Endothelial cell of umbilical vein (primary cell): ENCODE measurements at regions of chr6 and their contacts with region 1.

Region 1: DNA sequence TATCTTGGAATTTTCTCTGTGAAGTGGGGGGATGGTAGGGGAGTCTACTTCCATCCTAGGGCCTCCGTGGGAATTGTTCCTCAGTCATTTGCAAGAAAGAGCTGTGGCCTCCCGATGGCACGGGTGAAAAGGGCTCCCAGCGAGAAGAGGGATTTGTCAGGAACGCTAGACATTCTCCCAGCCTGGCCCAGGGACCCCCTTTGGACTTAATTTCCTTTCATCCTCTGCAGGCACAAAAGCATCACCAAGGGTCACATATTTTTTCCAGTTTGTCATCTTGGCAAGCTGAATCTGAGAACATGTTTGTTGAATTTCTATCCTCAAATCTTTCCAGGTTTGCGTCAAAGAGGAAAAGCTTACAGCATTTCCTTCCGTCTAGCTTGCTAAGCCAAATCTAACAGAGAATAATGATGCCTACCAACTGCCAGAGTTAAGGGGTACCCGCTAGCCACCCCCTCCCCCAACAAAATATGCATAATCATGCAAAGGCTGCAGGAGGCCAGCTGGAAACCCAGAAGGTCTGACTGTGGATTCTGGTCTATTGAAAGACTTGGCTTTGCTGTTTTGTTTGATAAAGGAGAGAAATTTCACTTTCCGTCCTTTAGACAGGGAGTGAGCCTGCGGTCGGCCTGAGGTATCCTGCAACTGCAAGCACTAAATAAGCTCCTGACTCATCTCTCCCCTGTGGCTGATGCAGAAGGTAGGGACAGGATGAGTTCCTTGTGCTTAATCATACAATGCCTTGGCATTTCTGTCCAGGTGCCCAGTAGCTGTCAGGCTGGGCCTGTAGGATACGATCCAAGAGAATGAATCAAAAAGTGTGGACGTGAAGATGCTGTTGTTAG is 23.1 kb downstream of the PSMG4 start:
- DNase-seq: peak; percentile 94
- H3K4me3 ChIP-seq: no peak overlapping the region
- H3K27ac ChIP-seq: peak overlapping the region; percentile 97
- H3K4me1 ChIP-seq: peaks cover 27% of the 10 kb centered on the region
- H3K27me3 ChIP-seq: no peaks in the 10 kb centered on the region
- CTCF ChIP-seq: no peak
- POLR2A ChIP-seq: no peak

Region 2: GRCh38 chr6:2988426-2989331 is 293.2 kb before region 1 on chr6:
- CTCF ChIA-PET with region 1: no interaction called
- POLR2A ChIA-PET with region 1: no interaction called
- dilution Hi-C with region 1: no loop called
- intact Hi-C with region 1: no loop called
- DNase-seq: peak; percentile 98
- H3K4me3 ChIP-seq: peak overlapping the region; percentile 53 to 78 (median 68)
- H3K27ac ChIP-seq: peak overlapping the region; percentile 84
- H3K4me1 ChIP-seq: peaks cover 15% of the 10 kb centered on the region
- H3K27me3 ChIP-seq: no peaks in the 10 kb centered on the region
- CTCF ChIP-seq: peak; percentile 80 to 82
- POLR2A ChIP-seq: peak; percentile 93

Region 3: GRCh38 chr6:3314176-3314575 is 32.3 kb after region 1 on chr6:
- CTCF ChIA-PET with region 1: no interaction called
- POLR2A ChIA-PET with region 1: no interaction called
- dilution Hi-C with region 1: no loop called
- intact Hi-C with region 1: no loop called
- DNase-seq: no peak
- H3K4me3 ChIP-seq: no peak overlapping the region
- H3K27ac ChIP-seq: no peak overlapping the region
- H3K4me1 ChIP-seq: no peaks in the 10 kb centered on the region
- H3K27me3 ChIP-seq: no peaks in the 10 kb centered on the region
- CTCF ChIP-seq: no peak
- POLR2A ChIP-seq: no peak

Region 4: GRCh38 chr6:3410385-3411360 is 128.8 kb after region 1 on chr6:
- CTCF ChIA-PET with region 1: interaction called, 27 read pairs
- POLR2A ChIA-PET with region 1: no interaction called
- dilution Hi-C with region 1: no loop called
- intact Hi-C with region 1: loop called (anchors 1 kb)
- DNase-seq: peak; percentile 59
- H3K4me3 ChIP-seq: no peak overlapping the region
- H3K27ac ChIP-seq: no peak overlapping the region
- H3K4me1 ChIP-seq: no peaks in the 10 kb centered on the region
- H3K27me3 ChIP-seq: no peaks in the 10 kb centered on the region
- CTCF ChIP-seq: peak; percentile 85 to 87
- POLR2A ChIP-seq: no peak

Region 5: GRCh38 chr6:3511926-3512325 is 230.1 kb after region 1 on chr6:
- CTCF ChIA-PET with region 1: interaction called, 5 read pairs
- POLR2A ChIA-PET with region 1: no interaction called
- dilution Hi-C with region 1: no loop called
- intact Hi-C with region 1: loop called (anchors 1 kb)
- DNase-seq: no peak
- H3K4me3 ChIP-seq: no peak overlapping the region
- H3K27ac ChIP-seq: no peak overlapping the region
- H3K4me1 ChIP-seq: no peaks in the 10 kb centered on the region
- H3K27me3 ChIP-seq: peaks cover 0 to 5% of the 10 kb centered on the region in 2 experiments
- CTCF ChIP-seq: no peak
- POLR2A ChIP-seq: no peak

Region 6: DNA sequence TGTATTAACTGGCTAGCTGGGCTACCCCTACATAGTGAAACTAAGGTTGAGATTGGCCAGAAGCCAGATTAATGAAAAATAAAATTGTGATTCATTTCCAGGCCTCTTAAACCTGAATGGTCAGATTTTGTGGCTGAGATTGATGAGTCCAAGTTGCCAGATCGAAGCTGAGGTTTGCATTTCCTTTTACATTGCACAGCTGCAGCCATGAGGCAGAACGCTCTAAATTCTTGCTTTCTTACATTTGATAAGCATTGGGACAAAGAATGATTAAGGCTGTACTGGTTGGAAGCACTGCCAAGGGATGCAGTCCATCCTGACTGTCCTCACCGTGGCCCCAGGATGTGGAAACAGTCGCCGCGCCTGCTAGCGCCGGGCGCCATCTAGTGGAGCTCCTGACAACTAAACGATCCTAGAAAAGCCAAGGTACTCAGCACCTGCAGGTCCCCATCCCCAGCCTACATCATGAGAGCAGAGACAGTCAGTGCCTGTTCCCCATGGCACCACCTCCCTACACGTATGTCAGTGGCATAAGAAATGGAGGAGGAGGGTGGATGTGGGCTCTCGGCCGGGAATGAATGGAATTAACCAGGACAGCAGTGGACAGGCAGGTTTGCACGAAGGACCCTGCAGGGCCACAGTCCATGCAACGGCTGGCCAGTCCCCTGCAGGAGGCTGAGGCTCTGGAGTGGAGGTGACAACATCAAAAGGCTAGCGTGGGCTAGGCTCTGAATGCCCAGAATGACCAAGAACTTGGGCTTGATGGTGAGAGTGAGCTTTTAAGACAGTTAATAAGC is 450.7 kb after region 1 on chr6:
- CTCF ChIA-PET with region 1: interaction called, 133 read pairs
- POLR2A ChIA-PET with region 1: no interaction called
- dilution Hi-C with region 1: no loop called
- intact Hi-C with region 1: loop called (anchors 1 kb)
- DNase-seq: peak; percentile 88
- H3K4me3 ChIP-seq: no peak overlapping the region
- H3K27ac ChIP-seq: no peak overlapping the region
- H3K4me1 ChIP-seq: peaks cover 40% of the 10 kb centered on the region
- H3K27me3 ChIP-seq: no peaks in the 10 kb centered on the region
- CTCF ChIP-seq: peak; percentile 79 to 84
- POLR2A ChIP-seq: peak; percentile 22

Region 7: GRCh38 chr6:3887150-3887700 is 605.4 kb after region 1 on chr6:
- CTCF ChIA-PET with region 1: interaction called, 8 read pairs
- POLR2A ChIA-PET with region 1: no interaction called
- dilution Hi-C with region 1: no loop called
- intact Hi-C with region 1: loop called (anchors 2 kb)
- DNase-seq: peak; percentile 67
- H3K4me3 ChIP-seq: no peak overlapping the region
- H3K27ac ChIP-seq: no peak overlapping the region
- H3K4me1 ChIP-seq: peaks cover 19% of the 10 kb centered on the region
- H3K27me3 ChIP-seq: no peaks in the 10 kb centered on the region
- CTCF ChIP-seq: peak; percentile 45 to 62
- POLR2A ChIP-seq: no peak

Region 8: GRCh38 chr6:3929281-3929798 is 647.5 kb after region 1 on chr6:
- CTCF ChIA-PET with region 1: interaction called, 5 read pairs
- POLR2A ChIA-PET with region 1: no interaction called
- dilution Hi-C with region 1: no loop called
- intact Hi-C with region 1: loop called (anchors 5 kb)
- DNase-seq: no peak
- H3K4me3 ChIP-seq: no peak overlapping the region
- H3K27ac ChIP-seq: no peak overlapping the region
- H3K4me1 ChIP-seq: no peaks in the 10 kb centered on the region
- H3K27me3 ChIP-seq: no peaks in the 10 kb centered on the region
- CTCF ChIP-seq: no peak
- POLR2A ChIP-seq: no peak

Region 9: GRCh38 chr6:4008324-4009047 is 726.6 kb after region 1 on chr6:
- CTCF ChIA-PET with region 1: interaction called, 20 read pairs
- POLR2A ChIA-PET with region 1: no interaction called
- dilution Hi-C with region 1: no loop called
- intact Hi-C with region 1: loop called (anchors 1 kb)
- DNase-seq: peak; percentile 76
- H3K4me3 ChIP-seq: no peak overlapping the region
- H3K27ac ChIP-seq: no peak overlapping the region
- H3K4me1 ChIP-seq: no peaks in the 10 kb centered on the region
- H3K27me3 ChIP-seq: no peaks in the 10 kb centered on the region
- CTCF ChIP-seq: peak; percentile 19 to 45
- POLR2A ChIP-seq: no peak